Caco-2 (cell line): ENCODE measurements at regions of chr11 and their contacts with region 1.

Region 1: GRCh38 chr11:124961972-124962609 is 8.1 kb downstream of the CCDC15 start:
- DNase-seq: peak in 1 of 2 experiments; percentile 76
- H3K4me3 ChIP-seq: no peak overlapping the region
- H3K4me3 Mint-ChIP-seq: no peak overlapping the region
- H3K27ac Mint-ChIP-seq: no peak overlapping the region
- H3K4me1 ChIP-seq: no peaks in the 10 kb centered on the region
- H3K4me1 Mint-ChIP-seq: no peaks in the 10 kb centered on the region
- H3K27me3 ChIP-seq: no peaks in the 10 kb centered on the region
- H3K27me3 Mint-ChIP-seq: peaks cover 4% of the 10 kb centered on the region
- CTCF ChIP-seq: peak; percentile 86 to 90

Region 2: DNA sequence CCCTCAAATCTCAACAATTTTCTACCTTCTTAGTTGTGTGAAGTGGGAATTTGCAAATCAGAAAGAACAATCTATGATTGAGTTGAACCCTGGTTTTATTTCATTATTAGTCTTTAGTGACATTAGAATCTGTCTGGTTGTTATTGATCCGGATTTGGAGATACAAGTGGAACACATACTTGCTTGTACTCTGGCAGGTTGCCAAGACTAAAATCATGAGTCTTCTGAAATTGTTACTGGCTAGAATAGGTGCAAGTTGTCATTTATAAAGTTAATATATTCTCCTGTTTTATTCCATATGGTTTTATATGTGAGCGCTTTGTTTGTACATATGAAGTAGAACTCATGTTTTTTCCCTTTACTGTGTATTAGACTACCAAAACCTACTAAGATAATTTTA is 14.9 kb after region 1 on chr11:
- CTCF ChIA-PET with region 1: no interaction called
- POLR2A ChIA-PET with region 1: no interaction called
- intact Hi-C with region 1: no loop called
- DNase-seq: no peak
- H3K4me3 ChIP-seq: no peak overlapping the region
- H3K4me3 Mint-ChIP-seq: no peak overlapping the region
- H3K27ac Mint-ChIP-seq: no peak overlapping the region
- H3K4me1 ChIP-seq: no peaks in the 10 kb centered on the region
- H3K4me1 Mint-ChIP-seq: no peaks in the 10 kb centered on the region
- H3K27me3 ChIP-seq: no peaks in the 10 kb centered on the region
- H3K27me3 Mint-ChIP-seq: no peaks in the 10 kb centered on the region
- CTCF ChIP-seq: no peak

Region 3: GRCh38 chr11:125085301-125086081 is 123.4 kb after region 1 on chr11:
- CTCF ChIA-PET with region 1: no interaction called
- POLR2A ChIA-PET with region 1: no interaction called
- intact Hi-C with region 1: loop called (anchors 1 kb)
- DNase-seq: peak in 1 of 2 experiments; percentile 35
- H3K4me3 ChIP-seq: no peak overlapping the region
- H3K4me3 Mint-ChIP-seq: no peak overlapping the region
- H3K27ac Mint-ChIP-seq: no peak overlapping the region
- H3K4me1 ChIP-seq: peaks cover 4% of the 10 kb centered on the region; the same call in 1 of the 2 replicates
- H3K4me1 Mint-ChIP-seq: no peaks in the 10 kb centered on the region
- H3K27me3 ChIP-seq: no peaks in the 10 kb centered on the region
- H3K27me3 Mint-ChIP-seq: no peaks in the 10 kb centered on the region
- CTCF ChIP-seq: peak in 1 of 2 experiments; percentile 17

Region 4: DNA sequence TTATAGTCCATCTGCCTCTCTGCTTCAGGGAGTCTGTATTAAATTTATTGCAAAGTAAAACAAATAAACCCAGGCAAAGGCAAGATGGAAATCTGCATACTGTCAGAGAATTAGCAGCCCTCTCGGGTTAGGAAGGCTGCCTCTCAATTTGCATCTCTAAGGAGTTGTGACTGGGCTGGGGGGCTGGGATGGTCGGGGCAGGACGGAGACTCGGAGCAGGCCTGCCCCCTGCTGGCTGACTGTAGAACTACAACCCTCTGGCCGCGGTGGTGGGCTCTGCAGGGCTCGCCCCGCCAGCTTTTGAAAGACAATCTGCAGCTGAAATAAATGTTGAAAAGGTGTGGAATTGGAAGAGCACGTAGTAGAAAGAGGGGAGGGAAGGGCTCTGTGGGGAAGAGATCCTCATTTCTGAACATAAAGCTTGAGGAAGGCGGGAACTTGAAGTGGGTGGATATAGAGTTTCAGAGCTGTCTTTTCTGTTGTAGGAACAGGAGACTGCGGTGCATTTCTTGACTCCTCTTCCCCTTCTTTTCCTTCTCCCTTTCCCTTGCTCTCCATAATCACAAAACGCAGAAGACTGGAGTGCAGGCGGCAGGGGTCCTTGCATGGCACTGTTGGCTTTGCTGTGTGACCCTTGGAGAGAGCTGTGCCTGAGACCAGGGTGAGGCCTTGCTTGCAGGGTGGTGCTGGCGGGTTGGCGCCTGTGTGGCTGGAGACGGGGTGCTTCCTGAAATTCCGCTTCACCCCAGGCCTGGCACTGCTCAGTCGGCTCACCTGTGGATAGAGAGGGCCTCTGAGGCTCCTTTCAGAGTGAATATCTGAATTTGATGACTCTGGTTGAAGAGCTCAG is 179.8 kb after region 1 on chr11:
- CTCF ChIA-PET with region 1: interaction called, 4 read pairs
- POLR2A ChIA-PET with region 1: no interaction called
- intact Hi-C with region 1: loop called (anchors 1 kb)
- DNase-seq: peak; percentile 56 to 82
- H3K4me3 ChIP-seq: no peak overlapping the region
- H3K4me3 Mint-ChIP-seq: no peak overlapping the region
- H3K27ac Mint-ChIP-seq: no peak overlapping the region
- H3K4me1 ChIP-seq: 0 out of 2 replicates have a peak, but pooled peaks cover 5% of the 10 kb centered on the region
- H3K4me1 Mint-ChIP-seq: no peaks in the 10 kb centered on the region
- H3K27me3 ChIP-seq: no peaks in the 10 kb centered on the region
- H3K27me3 Mint-ChIP-seq: peaks cover 7% of the 10 kb centered on the region
- CTCF ChIP-seq: peak; percentile 98 to 100

Region 5: GRCh38 chr11:125345421-125346178 is 383.5 kb after region 1 on chr11:
- CTCF ChIA-PET with region 1: interaction called, 3 read pairs
- POLR2A ChIA-PET with region 1: no interaction called
- intact Hi-C with region 1: loop called (anchors 1 kb)
- DNase-seq: peak in 1 of 2 experiments; percentile 72
- H3K4me3 ChIP-seq: no peak overlapping the region
- H3K4me3 Mint-ChIP-seq: no peak overlapping the region
- H3K27ac Mint-ChIP-seq: no peak overlapping the region
- H3K4me1 ChIP-seq: no peaks in the 10 kb centered on the region
- H3K4me1 Mint-ChIP-seq: peaks cover 7% of the 10 kb centered on the region
- H3K27me3 ChIP-seq: peaks cover 3% of the 10 kb centered on the region; the same call in 1 of the 2 replicates
- H3K27me3 Mint-ChIP-seq: peaks cover 14% of the 10 kb centered on the region
- CTCF ChIP-seq: peak; percentile 90

Region 6: DNA sequence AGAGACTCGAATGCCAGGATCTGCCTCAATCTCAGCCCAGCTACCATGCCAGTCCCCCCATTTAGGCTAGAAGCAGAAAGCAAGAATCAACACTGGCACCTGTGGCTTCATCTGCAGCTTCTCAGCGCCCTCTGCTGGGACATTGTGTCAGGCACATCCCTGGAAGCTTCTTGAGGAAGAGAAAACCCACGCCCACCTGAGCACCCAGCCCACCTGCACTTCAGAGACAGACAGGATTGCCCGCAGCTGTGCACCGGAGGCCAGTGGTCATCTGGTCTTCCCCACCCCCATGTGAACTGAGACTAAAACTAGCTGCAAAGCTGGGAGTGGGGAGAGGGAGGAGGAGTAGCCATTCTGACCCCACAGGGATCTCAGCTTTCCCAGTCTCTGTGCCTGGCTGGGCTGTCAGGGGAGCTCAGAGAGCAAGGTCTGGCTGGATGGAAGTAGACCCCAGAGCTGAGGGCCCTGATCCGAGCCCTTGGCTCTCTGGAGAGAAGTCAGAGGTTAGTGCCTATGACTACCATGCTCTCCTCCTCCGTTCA is 467.1 kb after region 1 on chr11:
- CTCF ChIA-PET with region 1: no interaction called
- POLR2A ChIA-PET with region 1: no interaction called
- intact Hi-C with region 1: loop called (anchors 1 kb)
- DNase-seq: peak; percentile 76 to 78
- H3K4me3 ChIP-seq: no peak overlapping the region
- H3K4me3 Mint-ChIP-seq: no peak overlapping the region
- H3K27ac Mint-ChIP-seq: no peak overlapping the region
- H3K4me1 ChIP-seq: 0 out of 2 replicates have a peak, but pooled peaks cover 7% of the 10 kb centered on the region
- H3K4me1 Mint-ChIP-seq: no peaks in the 10 kb centered on the region
- H3K27me3 ChIP-seq: peaks cover 1% of the 10 kb centered on the region; the same call in 1 of the 2 replicates
- H3K27me3 Mint-ChIP-seq: peaks cover 24% of the 10 kb centered on the region
- CTCF ChIP-seq: peak; percentile 93 to 95